ENCODE measurements at regions of chr16 and their contacts with region 1.

Region 1: GRCh38 chr16:50024684-50025536 is at the start of gene CNEP1R1:
- DNase-seq: peak; percentile 95 to 98
- H3K4me3 ChIP-seq: peak within 1 kb of the TSS; percentile 98
- CTCF ChIP-seq: peak in 2 of 3 donors; percentile 88 to 99
- POLR2A ChIP-seq: no peak
- total RNA-seq, gene CNEP1R1: 10.3 to 18.9 (median 17.5) TPM

Region 2: GRCh38 chr16:49834531-49835151 is 190.3 kb before region 1 on chr16:
- intact Hi-C with region 1: no loop called
- DNase-seq: no peak
- H3K4me3 ChIP-seq: no peak overlapping the region
- CTCF ChIP-seq: no peak
- POLR2A ChIP-seq: no peak

Region 3: GRCh38 chr16:50093607-50094539 is 69.0 kb after region 1 on chr16:
- intact Hi-C with region 1: no loop called
- DNase-seq: peak; percentile 72 to 93
- H3K4me3 ChIP-seq: no peak overlapping the region
- CTCF ChIP-seq: no peak
- POLR2A ChIP-seq: no peak

Region 4: GRCh38 chr16:50210266-50211038 is 185.5 kb after region 1 on chr16:
- intact Hi-C with region 1: loop called (anchors 5 kb)
- DNase-seq: peak; percentile 51 to 91
- H3K4me3 ChIP-seq: no peak overlapping the region
- CTCF ChIP-seq: no peak
- POLR2A ChIP-seq: no peak

Region 5: DNA sequence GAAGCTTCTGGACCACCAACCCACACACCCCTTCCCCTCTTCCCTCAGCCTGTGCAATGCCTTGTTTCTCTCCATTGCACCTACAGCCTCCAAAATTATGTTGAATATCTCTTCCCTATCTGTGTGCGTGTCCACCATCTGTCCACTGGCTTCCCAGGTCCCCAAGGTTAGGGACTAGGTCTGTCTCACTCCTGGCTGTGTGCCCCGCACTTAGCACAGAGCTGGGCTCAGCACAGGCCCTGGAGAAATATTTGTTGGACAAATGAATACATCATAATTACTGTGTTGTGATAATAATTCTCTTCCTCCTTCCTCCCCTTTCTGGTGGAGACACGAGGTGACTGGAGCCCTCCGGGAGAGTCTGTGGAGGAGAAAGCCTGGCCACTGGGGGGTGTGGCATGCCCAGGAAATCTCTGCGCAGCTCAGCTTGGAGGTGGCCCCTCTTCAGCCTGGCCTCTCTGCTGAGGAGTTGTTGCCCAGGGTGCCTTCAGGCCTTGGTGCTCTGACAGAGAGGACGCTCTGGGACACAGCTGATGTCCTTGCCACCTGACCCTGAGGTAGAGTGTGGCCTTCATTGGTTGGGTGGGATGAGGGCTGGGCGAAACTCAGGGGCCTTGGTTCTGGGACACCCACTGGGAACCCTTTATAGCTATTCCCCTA is 347.2 kb after region 1 on chr16:
- intact Hi-C with region 1: loop called (anchors 10 kb)
- DNase-seq: no peak
- H3K4me3 ChIP-seq: no peak overlapping the region
- CTCF ChIP-seq: no peak
- POLR2A ChIP-seq: no peak

Measured in lower leg skin (tissue), 4 donors.